GM12878 (cell line): ENCODE measurements at regions of chr4 and their contacts with region 1.

Region 1: DNA sequence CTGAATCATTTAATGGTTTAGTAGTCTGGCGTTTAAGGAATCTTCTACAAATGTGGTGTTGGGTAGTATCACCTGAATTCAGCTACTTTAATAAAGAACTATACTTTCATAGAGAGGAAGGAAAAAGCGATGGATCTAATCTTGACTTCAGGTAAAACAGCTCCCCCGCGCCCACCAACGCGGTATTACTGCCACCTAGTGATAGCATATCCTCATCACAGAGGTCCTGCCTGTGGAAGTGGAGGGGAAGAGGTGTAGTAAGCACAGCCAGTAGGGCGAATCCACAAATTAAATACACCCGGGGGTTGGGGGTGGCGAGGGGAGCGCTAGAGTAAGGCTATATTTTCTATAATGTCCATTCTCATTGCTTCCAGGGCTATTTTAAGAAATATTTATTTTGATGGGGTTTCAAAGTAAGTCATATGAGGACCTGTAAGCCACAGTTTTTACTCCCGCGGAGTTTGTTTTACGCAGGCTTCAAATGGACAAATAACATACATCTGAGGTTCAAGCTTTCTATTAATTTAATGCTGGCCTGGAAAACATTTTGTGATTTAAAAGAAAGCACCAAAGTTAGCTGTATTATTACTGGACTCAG is 8.3 kb upstream of the DAPP1 start:
- DNase-seq: no peak
- ATAC-seq: peak; percentile 94
- H3K4me3 ChIP-seq: no peak overlapping the region
- H3K27ac ChIP-seq: no peak overlapping the region
- H3K4me1 ChIP-seq: peaks cover 5% of the 10 kb centered on the region; the same call in 1 of the 2 replicates
- H3K27me3 ChIP-seq: no peaks in the 10 kb centered on the region; a peak in 1 of 4 replicates
- CTCF ChIP-seq: peak; percentile 75 to 85 (median 79)
- EP300 ChIP-seq: no peak
- POLR2A ChIP-seq: no peak
- RAD21 ChIP-seq: peak; percentile 93

Region 2: DNA sequence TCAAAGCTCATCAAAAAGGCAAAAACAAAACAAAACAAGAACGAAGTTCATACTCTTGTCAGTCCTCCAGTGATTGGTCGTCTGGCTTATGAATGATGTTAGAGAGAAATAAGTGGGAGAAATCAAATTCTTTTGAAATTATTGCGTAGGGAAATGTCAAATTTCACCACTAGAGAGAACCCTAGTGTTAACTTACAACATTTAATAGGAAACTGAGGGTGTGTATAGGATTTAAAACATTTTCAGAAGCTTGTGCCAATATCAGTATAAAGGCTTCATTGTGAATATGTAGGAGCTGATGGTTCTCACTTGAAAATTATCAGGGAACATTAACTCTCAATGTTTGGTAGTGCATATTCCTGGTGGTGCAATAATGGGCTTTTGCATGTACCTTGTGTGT is 606.7 kb before region 1 on chr4:
- CTCF ChIA-PET with region 1: no interaction called
- POLR2A ChIA-PET with region 1: no interaction called
- RAD21 ChIA-PET with region 1: no interaction called
- SMC1A ChIA-PET with region 1: no interaction called
- in situ Hi-C with region 1: no loop called
- intact Hi-C with region 1: no loop called
- DNase-seq: no peak
- ATAC-seq: no peak
- H3K4me3 ChIP-seq: no peak overlapping the region
- H3K27ac ChIP-seq: no peak overlapping the region
- H3K4me1 ChIP-seq: no peaks in the 10 kb centered on the region
- H3K27me3 ChIP-seq: no peaks in the 10 kb centered on the region
- CTCF ChIP-seq: no peak
- EP300 ChIP-seq: no peak
- POLR2A ChIP-seq: no peak
- RAD21 ChIP-seq: no peak

Region 3: GRCh38 chr4:99518601-99519295 is 289.6 kb before region 1 on chr4:
- CTCF ChIA-PET with region 1: no interaction called
- POLR2A ChIA-PET with region 1: no interaction called
- RAD21 ChIA-PET with region 1: no interaction called
- SMC1A ChIA-PET with region 1: no interaction called
- in situ Hi-C with region 1: no loop called
- intact Hi-C with region 1: no loop called
- DNase-seq: no peak
- ATAC-seq: no peak
- H3K4me3 ChIP-seq: no peak overlapping the region
- H3K27ac ChIP-seq: no peak overlapping the region
- H3K4me1 ChIP-seq: no peaks in the 10 kb centered on the region
- H3K27me3 ChIP-seq: no peaks in the 10 kb centered on the region
- CTCF ChIP-seq: no peak
- EP300 ChIP-seq: no peak
- POLR2A ChIP-seq: no peak
- RAD21 ChIP-seq: no peak

Region 4: DNA sequence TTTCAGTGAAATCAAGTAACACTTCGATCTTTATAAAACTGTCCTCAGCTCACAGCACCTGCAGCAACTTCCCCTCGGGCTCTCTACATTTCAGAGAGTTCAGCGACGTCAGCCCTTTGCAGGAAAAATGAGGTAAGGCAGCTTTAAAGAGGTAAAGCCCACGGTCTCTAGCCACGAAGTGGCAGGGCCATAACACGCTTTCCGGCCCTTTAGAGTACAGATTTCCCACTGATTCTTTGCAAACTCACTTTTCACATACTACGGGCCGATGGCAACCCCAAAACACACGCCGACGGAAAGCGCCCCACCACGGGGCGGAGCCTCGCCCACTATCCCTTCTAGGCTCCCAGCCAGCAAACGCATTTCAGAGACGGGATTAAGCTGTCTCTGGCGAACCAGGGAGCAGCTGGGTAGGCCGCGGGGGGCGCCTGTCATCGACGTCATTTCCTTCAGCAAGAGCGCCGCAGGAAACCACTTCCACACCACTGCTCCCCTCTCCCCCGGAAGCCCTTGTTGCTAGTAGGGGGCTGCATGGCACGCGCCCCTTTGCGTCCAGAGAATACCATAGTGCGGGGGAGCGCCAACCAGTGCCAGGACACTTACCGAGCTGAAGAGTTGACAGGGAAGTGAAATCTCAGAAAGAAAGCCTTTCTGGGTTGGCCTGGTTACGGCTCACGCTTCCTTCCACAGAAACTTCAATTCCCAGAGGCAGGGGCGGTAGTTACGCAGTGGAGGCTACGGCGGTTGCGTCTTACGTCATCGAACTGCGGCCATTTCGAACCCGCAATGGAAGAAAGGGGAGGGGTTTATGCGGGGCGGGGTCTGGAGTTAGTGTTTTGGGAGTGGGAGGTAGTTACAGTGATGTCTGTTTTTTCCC is 244.8 kb before region 1 on chr4 and contains the start of gene TRMT10A:
- CTCF ChIA-PET with region 1: interaction called, 70 read pairs
- POLR2A ChIA-PET with region 1: interaction called, 7 read pairs
- RAD21 ChIA-PET with region 1: interaction called, 31 read pairs
- SMC1A ChIA-PET with region 1: interaction called, 50 read pairs
- in situ Hi-C with region 1: loop called (anchors 5 kb)
- intact Hi-C with region 1: loop called (anchors 1 kb)
- DNase-seq: peak; percentile 85
- ATAC-seq: peak; percentile 95
- H3K4me3 ChIP-seq: peak within 1 kb of the TSS; percentile 93
- H3K27ac ChIP-seq: peak within 1 kb of the TSS; percentile 97
- H3K4me1 ChIP-seq: no peaks in the 10 kb centered on the region
- H3K27me3 ChIP-seq: no peaks in the 10 kb centered on the region
- CTCF ChIP-seq: no peak
- EP300 ChIP-seq: no peak
- POLR2A ChIP-seq: peak; percentile 81
- RAD21 ChIP-seq: no peak
- polyA plus RNA-seq, gene TRMT10A: 8.8 to 9.6 TPM

Region 5: DNA sequence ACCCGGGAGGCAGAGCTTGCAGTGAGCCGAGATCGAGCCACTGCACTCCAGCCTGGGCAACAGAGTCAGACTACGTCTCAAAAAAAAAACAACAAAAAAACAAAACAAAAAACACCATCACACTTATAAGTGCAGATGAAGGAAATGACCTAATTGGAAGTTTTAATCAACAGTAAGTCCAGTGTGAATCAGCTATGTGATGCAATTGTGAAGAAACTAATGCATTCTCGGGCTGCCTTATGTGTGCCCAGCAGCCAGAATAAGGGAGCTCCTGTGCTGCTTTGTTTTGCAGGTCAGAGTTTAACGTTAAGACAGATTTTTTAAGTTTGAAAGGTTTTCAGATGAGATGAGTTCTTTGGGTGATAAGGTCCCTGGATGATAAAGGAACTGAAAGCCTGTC is 19.1 kb after region 1 on chr4:
- CTCF ChIA-PET with region 1: interaction called, 62 read pairs
- POLR2A ChIA-PET with region 1: no interaction called
- RAD21 ChIA-PET with region 1: interaction called, 13 read pairs
- SMC1A ChIA-PET with region 1: interaction called, 16 read pairs
- in situ Hi-C with region 1: no loop called
- intact Hi-C with region 1: no loop called
- DNase-seq: no peak
- ATAC-seq: peak; percentile 3; the same call in 1 of the 3 replicates
- H3K4me3 ChIP-seq: no peak overlapping the region
- H3K27ac ChIP-seq: no peak overlapping the region
- H3K4me1 ChIP-seq: peaks cover 9% of the 10 kb centered on the region; the same call in 1 of the 2 replicates
- H3K27me3 ChIP-seq: no peaks in the 10 kb centered on the region
- CTCF ChIP-seq: no peak
- EP300 ChIP-seq: no peak
- POLR2A ChIP-seq: no peak
- RAD21 ChIP-seq: no peak

Region 6: GRCh38 chr4:99861120-99861905 is 53.0 kb after region 1 on chr4:
- CTCF ChIA-PET with region 1: interaction called, 23 read pairs
- POLR2A ChIA-PET with region 1: interaction called, 6 read pairs
- RAD21 ChIA-PET with region 1: interaction called, 8 read pairs
- SMC1A ChIA-PET with region 1: interaction called, 17 read pairs
- in situ Hi-C with region 1: no loop called
- intact Hi-C with region 1: no loop called
- DNase-seq: no peak
- ATAC-seq: peak; percentile 81
- H3K4me3 ChIP-seq: no peak overlapping the region
- H3K27ac ChIP-seq: peak overlapping the region; percentile 24; the same call in 1 of the 2 replicates
- H3K4me1 ChIP-seq: peaks cover 14% of the 10 kb centered on the region
- H3K27me3 ChIP-seq: no peaks in the 10 kb centered on the region
- CTCF ChIP-seq: no peak
- EP300 ChIP-seq: no peak
- POLR2A ChIP-seq: no peak
- RAD21 ChIP-seq: no peak

Region 7: GRCh38 chr4:99894161-99894997 is 86.0 kb after region 1 on chr4 and contains the start of gene LAMTOR3:
- CTCF ChIA-PET with region 1: interaction called, 25 read pairs
- POLR2A ChIA-PET with region 1: interaction called, 3 read pairs
- RAD21 ChIA-PET with region 1: interaction called, 8 read pairs
- SMC1A ChIA-PET with region 1: interaction called, 18 read pairs
- in situ Hi-C with region 1: no loop called
- intact Hi-C with region 1: no loop called
- DNase-seq: peak; percentile 75
- ATAC-seq: peak; percentile 99
- H3K4me3 ChIP-seq: peak within 1 kb of the TSS; percentile 100
- H3K27ac ChIP-seq: peak within 1 kb of the TSS; percentile 69
- H3K4me1 ChIP-seq: no peaks in the 10 kb centered on the region
- H3K27me3 ChIP-seq: no peaks in the 10 kb centered on the region
- CTCF ChIP-seq: no peak
- EP300 ChIP-seq: no peak
- POLR2A ChIP-seq: peak; percentile 83
- RAD21 ChIP-seq: no peak
- polyA plus RNA-seq, gene LAMTOR3: 88.7 to 120 TPM

Region 8: GRCh38 chr4:100060765-100061416 is 252.5 kb after region 1 on chr4:
- CTCF ChIA-PET with region 1: interaction called, 4 read pairs
- POLR2A ChIA-PET with region 1: no interaction called
- RAD21 ChIA-PET with region 1: no interaction called
- SMC1A ChIA-PET with region 1: no interaction called
- in situ Hi-C with region 1: no loop called
- intact Hi-C with region 1: loop called (anchors 5 kb)
- DNase-seq: no peak
- ATAC-seq: peak; percentile 83
- H3K4me3 ChIP-seq: no peak overlapping the region
- H3K27ac ChIP-seq: no peak overlapping the region
- H3K4me1 ChIP-seq: no peaks in the 10 kb centered on the region
- H3K27me3 ChIP-seq: no peaks in the 10 kb centered on the region
- CTCF ChIP-seq: no peak
- EP300 ChIP-seq: no peak
- POLR2A ChIP-seq: no peak
- RAD21 ChIP-seq: no peak